ENCODE measurements at regions of chr2 and their contacts with region 1.

Region 1: GRCh38 chr2:239143858-239144718 is 256.7 kb downstream of the HDAC4 start:
- DNase-seq: peak in 1 of 2 donors; percentile 72
- ATAC-seq: peak; percentile 46 to 78 (median 70)
- H3K4me3 ChIP-seq: no peak overlapping the region
- H3K27ac ChIP-seq: no peak overlapping the region
- H3K4me1 ChIP-seq: no peaks in the 10 kb centered on the region
- H3K27me3 ChIP-seq: no peaks in the 10 kb centered on the region
- CTCF ChIP-seq: peak; percentile 55

Region 2: GRCh38 chr2:239401067-239401880 is 257.2 kb after region 1 on chr2:
- intact Hi-C with region 1: loop called in 1 of 2 experiments (anchors 10 kb)
- DNase-seq: peak; percentile 99 to 100
- ATAC-seq: peak; percentile 90 to 95 (median 93)
- H3K4me3 ChIP-seq: peak overlapping the region; percentile 79
- H3K27ac ChIP-seq: peak overlapping the region; percentile 100
- H3K4me1 ChIP-seq: peaks cover 28% of the 10 kb centered on the region
- H3K27me3 ChIP-seq: no peaks in the 10 kb centered on the region
- CTCF ChIP-seq: no peak

Measured in psoas muscle (tissue), 8 donors.